ENCODE measurements at regions of chr5 and their contacts with region 1.

Region 1: DNA sequence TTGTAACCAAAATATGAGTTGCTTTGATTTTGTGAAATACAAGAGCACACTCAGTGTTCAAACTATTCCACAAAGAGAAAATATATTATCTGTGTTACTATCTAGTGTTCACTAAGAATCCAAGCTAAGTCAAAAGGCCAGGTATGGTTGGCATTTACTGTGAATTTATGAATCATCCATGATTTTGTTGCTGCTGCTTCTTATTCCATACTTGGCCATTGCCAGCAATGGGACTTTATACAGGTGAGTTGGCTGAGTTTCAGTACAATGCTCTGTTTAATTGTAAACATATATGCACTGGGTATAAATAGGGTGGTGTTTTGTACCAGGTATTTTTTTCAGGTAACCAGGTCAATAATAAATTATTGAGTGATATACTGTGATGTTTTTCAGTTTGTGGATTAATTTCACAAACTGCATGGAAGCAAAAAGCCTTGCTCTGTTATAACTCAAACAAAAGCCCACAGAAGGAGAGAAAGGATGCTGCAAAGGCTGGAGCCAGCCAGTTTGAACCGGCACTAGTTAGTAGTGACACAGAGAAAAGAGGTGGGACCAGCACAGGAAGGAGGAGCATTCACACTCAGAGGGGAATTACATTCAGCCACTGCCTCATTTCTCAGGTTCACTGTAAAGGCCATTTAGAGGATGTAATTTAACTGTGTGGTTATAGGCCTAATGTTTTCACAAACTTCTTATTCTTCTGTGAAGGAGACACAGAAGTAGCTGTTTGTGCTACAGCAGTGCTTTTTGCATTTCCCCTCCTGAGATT is 381.8 kb downstream of the ADGRV1 start:
- DNase-seq: peak; percentile 24
- H3K4me3 ChIP-seq: no peak overlapping the region
- H3K27ac ChIP-seq: no peak overlapping the region
- H3K4me1 ChIP-seq: peaks cover 11% of the 10 kb centered on the region
- H3K27me3 ChIP-seq: no peaks in the 10 kb centered on the region
- CTCF ChIP-seq: no peak
- POLR2A ChIP-seq: no peak

Region 2: GRCh38 chr5:90534922-90535321 is 405.5 kb before region 1 on chr5:
- CTCF ChIA-PET with region 1: no interaction called
- POLR2A ChIA-PET with region 1: no interaction called
- dilution Hi-C with region 1: no loop called
- intact Hi-C with region 1: no loop called
- DNase-seq: no peak
- H3K4me3 ChIP-seq: no peak overlapping the region
- H3K27ac ChIP-seq: no peak overlapping the region
- H3K4me1 ChIP-seq: peaks cover 4% of the 10 kb centered on the region
- H3K27me3 ChIP-seq: peaks cover 12 to 46% of the 10 kb centered on the region in 2 experiments
- CTCF ChIP-seq: no peak
- POLR2A ChIP-seq: no peak

Region 3: DNA sequence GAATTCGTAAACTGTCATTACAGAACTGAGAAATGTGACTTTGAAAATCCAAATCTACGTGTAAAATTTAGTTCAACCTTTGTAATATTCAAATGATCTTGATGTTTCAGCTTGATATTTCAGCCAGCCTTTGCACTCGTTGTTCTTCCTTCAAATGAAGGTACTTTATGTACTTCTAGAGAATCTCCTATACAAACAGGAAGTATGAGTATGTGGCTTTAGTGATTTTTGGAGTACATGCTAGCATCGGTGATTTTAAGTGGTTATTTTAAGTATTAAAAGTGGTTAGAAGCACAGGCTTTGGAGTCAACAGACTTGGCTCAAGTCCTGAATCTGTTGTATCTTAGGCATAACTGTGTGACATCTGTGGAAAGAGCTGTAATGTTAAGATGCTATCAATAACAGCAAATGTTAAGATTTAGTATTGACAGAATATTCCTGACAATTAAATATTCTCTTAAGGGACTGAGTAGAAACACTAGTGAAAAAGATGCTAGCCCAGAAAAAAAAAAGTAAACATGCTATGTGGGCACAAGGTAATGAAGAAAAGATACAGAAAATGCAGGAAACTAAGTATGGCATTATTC is 16.2 kb after region 1 on chr5:
- CTCF ChIA-PET with region 1: interaction called, 5 read pairs
- POLR2A ChIA-PET with region 1: interaction called, 4 read pairs
- dilution Hi-C with region 1: no loop called
- intact Hi-C with region 1: loop called (anchors 2 kb)
- DNase-seq: peak; percentile 50
- H3K4me3 ChIP-seq: no peak overlapping the region
- H3K27ac ChIP-seq: peak overlapping the region; percentile 52
- H3K4me1 ChIP-seq: peaks cover 14% of the 10 kb centered on the region
- H3K27me3 ChIP-seq: no peaks in the 10 kb centered on the region
- CTCF ChIP-seq: no peak
- POLR2A ChIP-seq: no peak

Region 4: DNA sequence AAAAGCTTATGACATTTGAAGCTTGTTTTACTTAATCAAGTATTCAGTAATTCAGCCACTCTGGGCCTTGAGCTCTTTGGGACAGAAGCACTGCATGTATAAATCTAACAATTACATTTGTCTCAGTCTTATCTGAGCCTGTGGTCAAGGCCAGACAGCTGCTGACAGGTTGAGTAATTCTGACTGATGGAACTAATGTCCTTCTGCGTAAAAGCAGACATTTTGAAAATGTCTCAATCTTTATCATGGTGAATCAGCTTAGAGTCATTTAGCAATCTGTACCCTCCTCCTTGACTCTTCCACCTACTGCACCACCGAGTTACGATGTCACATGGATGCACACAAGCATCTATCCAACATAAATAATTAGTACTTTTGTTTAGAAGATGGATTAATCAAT is 42.7 kb after region 1 on chr5:
- CTCF ChIA-PET with region 1: no interaction called
- POLR2A ChIA-PET with region 1: interaction called, 13 read pairs
- dilution Hi-C with region 1: no loop called
- intact Hi-C with region 1: no loop called
- DNase-seq: peak; percentile 32
- H3K4me3 ChIP-seq: no peak overlapping the region
- H3K27ac ChIP-seq: no peak overlapping the region
- H3K4me1 ChIP-seq: no peaks in the 10 kb centered on the region
- H3K27me3 ChIP-seq: no peaks in the 10 kb centered on the region
- CTCF ChIP-seq: no peak
- POLR2A ChIP-seq: no peak

Measured in endothelial cell of umbilical vein (primary cell).